ENCODE measurements at regions of chr22 and their contacts with region 1.

Region 1: DNA sequence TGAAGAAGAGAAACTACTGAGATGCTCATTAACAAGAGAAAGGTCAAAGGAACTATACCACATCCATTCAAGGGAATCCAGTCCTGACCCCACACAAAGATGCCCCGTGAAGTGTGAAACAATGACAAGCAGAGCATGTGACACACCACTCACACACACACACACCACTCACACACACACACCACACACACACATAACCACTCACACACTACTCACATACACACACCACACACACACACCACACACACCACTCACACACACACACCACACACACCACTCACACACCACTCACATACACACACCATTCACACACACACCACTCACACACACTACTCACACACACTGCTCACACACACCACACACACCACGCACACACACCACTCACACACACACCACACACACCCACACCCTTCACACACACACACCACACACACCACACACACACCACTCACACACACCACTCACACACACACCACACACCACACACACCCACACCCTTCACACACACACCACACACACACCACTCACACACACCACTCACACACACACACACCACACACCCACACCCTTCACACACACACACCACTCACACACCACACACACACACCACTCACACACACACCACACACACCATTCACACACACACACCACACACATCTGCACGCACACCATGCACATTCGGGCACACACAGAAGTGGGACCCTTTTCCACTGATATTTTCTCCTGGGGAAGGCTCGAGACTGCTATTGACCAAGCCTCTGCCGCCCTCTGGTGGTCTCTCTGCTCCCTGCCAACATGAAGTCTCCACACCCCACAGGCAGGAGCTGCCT is 32.0 kb upstream of the COMT start:
- DNase-seq: peak; percentile 97 to 99 (median 98)
- ATAC-seq: peak; percentile 97
- H3K4me3 ChIP-seq: no peak overlapping the region
- H3K27ac ChIP-seq: peak overlapping the region; percentile 16; the same call in 1 of the 3 replicates
- H3K4me1 ChIP-seq: peaks cover 2 to 28% of the 10 kb centered on the region in 2 experiments; a peak in 4 of 5 replicates
- H3K27me3 ChIP-seq: no peaks in the 10 kb centered on the region; a peak in 1 of 5 replicates
- CTCF ChIP-seq: peak; percentile 98 to 100 (median 100)
- EP300 ChIP-seq: peak; percentile 51
- POLR2A ChIP-seq: peak; percentile 25; the same call in 1 of the 2 replicates
- RAD21 ChIP-seq: peak; percentile 100

Region 2: DNA sequence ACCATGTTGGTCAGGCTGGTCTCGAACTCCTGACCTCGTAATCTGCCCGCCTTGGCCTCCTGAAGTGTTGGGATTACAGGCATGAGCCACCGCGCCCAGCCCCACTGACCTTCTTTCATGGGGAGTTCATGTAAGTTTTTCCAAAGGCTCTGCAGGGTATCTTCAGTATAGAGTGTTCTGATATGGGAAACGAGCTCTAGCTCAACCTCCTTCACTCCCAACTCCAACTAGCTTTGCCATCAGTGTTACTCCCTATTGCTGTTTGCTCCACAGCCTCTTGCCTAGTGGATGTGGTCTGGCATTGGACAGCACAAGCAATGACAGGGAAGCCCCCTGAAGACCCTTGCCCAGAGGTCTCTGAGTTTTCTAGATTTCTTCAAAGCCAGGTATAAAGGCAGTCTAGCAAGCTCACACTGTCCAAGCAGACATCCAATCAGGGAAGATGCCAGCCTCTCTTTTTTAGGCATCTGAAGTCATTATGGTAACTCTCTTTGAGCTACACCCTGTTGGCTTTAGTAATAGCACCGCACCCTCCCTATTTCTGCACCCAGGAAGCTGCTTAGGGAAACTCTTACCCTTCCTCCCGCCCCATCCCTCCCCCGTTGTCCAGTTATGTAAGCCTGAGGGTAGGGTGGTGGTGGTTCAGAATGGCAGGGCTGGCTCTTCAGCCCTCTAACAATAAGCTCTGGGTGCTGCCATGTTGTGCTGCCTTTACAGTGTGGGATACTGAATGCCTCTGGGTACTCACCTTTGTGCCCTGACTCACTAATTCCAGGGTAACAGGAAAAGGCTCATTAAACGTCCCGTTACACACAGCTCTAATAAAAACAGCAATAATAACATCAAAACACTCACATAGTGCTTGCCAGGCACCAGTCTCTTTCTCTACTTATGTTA is 343.9 kb before region 1 on chr22:
- CTCF ChIA-PET with region 1: no interaction called
- POLR2A ChIA-PET with region 1: no interaction called
- in situ Hi-C with region 1: no loop called
- intact Hi-C with region 1: no loop called
- DNase-seq: peak in 2 of 4 experiments; percentile 24 to 40
- ATAC-seq: no peak
- H3K4me3 ChIP-seq: no peak overlapping the region
- H3K27ac ChIP-seq: no peak overlapping the region
- H3K4me1 ChIP-seq: peaks cover 0 to 8% of the 10 kb centered on the region in 2 experiments; a peak in 2 of 5 replicates
- H3K27me3 ChIP-seq: peaks cover 64 to 73% of the 10 kb centered on the region in 2 experiments
- CTCF ChIP-seq: no peak
- EP300 ChIP-seq: no peak
- POLR2A ChIP-seq: no peak
- RAD21 ChIP-seq: no peak

Region 3: DNA sequence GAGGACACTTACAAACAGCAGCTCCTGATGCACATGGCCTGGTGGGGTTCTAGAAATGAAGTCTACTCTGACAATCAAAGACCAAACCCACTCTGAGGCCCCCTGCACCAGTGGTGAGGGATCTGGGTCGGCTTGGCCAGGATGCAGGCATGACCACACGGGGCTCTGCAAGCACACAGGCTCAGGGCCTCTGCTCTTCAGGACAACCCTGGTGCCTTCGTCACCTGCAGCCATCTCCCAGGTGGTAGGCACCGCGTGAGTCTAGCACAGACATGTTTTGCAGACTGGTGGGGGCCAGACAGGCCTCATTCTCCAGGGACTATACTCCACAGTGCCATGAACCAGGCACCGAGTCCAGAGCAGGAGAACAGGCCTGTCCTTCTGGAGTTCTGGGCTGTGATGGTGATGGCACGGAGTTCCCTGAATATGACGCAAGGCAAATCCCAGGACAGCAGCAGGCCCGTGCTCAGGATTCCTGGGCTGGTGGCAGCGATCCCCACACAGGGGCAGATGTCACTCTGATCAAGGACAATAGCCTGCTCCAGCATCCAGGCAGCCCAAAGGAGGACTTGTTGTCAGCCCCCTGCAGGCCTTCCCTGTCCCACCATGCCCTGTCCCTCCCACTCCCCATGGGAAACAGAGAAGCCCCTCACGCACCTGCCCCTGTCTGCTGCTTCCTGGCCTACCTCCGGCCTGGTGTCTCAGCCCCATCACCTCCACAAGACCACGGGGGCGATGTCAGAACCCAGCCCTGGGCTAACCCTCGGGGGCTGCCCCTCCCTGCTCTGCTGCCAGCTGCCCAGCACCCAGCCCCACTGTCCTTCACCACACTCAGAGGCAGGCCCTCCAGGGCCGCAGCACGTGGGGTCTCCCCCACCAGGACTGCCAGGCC is 91.0 kb before region 1 on chr22:
- CTCF ChIA-PET with region 1: interaction called, 5 read pairs
- POLR2A ChIA-PET with region 1: interaction called, 4 read pairs
- in situ Hi-C with region 1: no loop called
- intact Hi-C with region 1: loop called (anchors 1 kb)
- DNase-seq: no peak
- ATAC-seq: no peak
- H3K4me3 ChIP-seq: no peak overlapping the region
- H3K27ac ChIP-seq: no peak overlapping the region
- H3K4me1 ChIP-seq: peaks cover 22 to 81% of the 10 kb centered on the region in 2 experiments
- H3K27me3 ChIP-seq: no peaks in the 10 kb centered on the region
- CTCF ChIP-seq: peak in 2 of 3 experiments; percentile 13 to 21; a peak in 1 of 6 replicates
- EP300 ChIP-seq: no peak
- POLR2A ChIP-seq: no peak
- RAD21 ChIP-seq: no peak

Region 4: GRCh38 chr22:19891317-19892256 is 18.0 kb before region 1 on chr22:
- CTCF ChIA-PET with region 1: no interaction called
- POLR2A ChIA-PET with region 1: interaction called, 141 read pairs
- in situ Hi-C with region 1: no loop called
- intact Hi-C with region 1: no loop called
- DNase-seq: peak; percentile 98 to 99 (median 98)
- ATAC-seq: peak; percentile 92
- H3K4me3 ChIP-seq: no peak overlapping the region
- H3K27ac ChIP-seq: peak overlapping the region; percentile 46; the same call in 2 of the 3 replicates
- H3K4me1 ChIP-seq: peaks cover 24 to 62% of the 10 kb centered on the region in 2 experiments
- H3K27me3 ChIP-seq: no peaks in the 10 kb centered on the region
- CTCF ChIP-seq: peak in 2 of 3 experiments; percentile 9 to 33; a peak in 2 of 6 replicates
- EP300 ChIP-seq: peak; percentile 99
- POLR2A ChIP-seq: no peak; the same call in 1 of the 2 replicates
- RAD21 ChIP-seq: peak in 1 of 2 experiments; percentile 54; a peak in 2 of 4 replicates

Region 5: DNA sequence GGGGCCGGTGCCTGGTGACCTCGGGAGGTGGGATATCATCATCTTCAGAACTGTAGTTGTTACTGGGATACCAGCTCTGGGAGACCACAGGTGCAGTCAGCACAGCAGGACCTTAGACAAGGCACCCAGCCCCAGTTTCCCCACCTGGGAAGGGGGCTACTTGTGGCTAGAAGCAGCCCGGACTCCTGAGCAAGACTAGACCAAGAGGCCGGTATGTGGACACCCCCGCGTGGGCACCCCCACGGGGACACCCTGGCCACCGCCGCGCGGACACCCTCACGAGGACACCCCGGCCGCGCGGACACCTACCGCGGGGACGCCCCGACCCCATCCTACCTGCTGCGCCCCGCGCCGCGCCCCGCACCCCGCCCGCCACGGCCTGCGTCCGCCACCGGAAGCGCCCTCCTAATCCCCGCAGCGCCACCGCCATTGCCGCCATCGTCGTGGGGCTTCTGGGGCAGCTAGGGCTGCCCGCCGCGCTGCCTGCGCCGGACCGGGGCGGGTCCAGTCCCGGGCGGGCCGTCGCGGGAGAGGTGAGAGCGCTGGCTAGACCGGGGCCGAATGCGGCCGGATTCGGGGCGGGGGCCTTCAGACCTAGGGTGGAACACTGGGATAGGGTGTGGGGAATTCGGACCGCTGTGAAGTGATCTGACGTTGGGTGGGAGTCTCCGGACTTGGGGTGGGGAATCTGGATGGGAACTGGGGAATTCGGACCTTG is 32.0 kb after region 1 on chr22 and contains the starts of genes COMT and TXNRD2:
- CTCF ChIA-PET with region 1: no interaction called
- POLR2A ChIA-PET with region 1: interaction called, 22 read pairs
- in situ Hi-C with region 1: no loop called
- intact Hi-C with region 1: no loop called
- DNase-seq: peak; percentile 96 to 100 (median 100)
- ATAC-seq: peak; percentile 88
- H3K4me3 ChIP-seq: peak within 1 kb of the TSS; percentile 58
- H3K27ac ChIP-seq: peak within 1 kb of the TSS; percentile 88
- H3K4me1 ChIP-seq: peaks cover 35 to 37% of the 10 kb centered on the region in 2 experiments
- H3K27me3 ChIP-seq: no peaks in the 10 kb centered on the region; a peak in 1 of 5 replicates
- CTCF ChIP-seq: peak in 1 of 3 experiments; percentile 34; a peak in 3 of 6 replicates
- EP300 ChIP-seq: peak; percentile 21; the same call in 1 of the 2 replicates
- POLR2A ChIP-seq: no peak
- RAD21 ChIP-seq: no peak
- polyA plus RNA-seq, gene COMT: 12.5 to 39.6 TPM
- polyA plus RNA-seq, gene TXNRD2: 3.3 to 4.4 TPM

Region 6: GRCh38 chr22:20062766-20063083 is 153.2 kb after region 1 on chr22:
- CTCF ChIA-PET with region 1: no interaction called
- POLR2A ChIA-PET with region 1: no interaction called
- in situ Hi-C with region 1: no loop called
- intact Hi-C with region 1: no loop called
- DNase-seq: peak in 1 of 4 experiments; percentile 52
- ATAC-seq: no peak
- H3K4me3 ChIP-seq: no peak overlapping the region
- H3K27ac ChIP-seq: no peak overlapping the region
- H3K4me1 ChIP-seq: peaks cover 24 to 76% of the 10 kb centered on the region in 2 experiments
- H3K27me3 ChIP-seq: no peaks in the 10 kb centered on the region
- CTCF ChIP-seq: no peak
- EP300 ChIP-seq: no peak
- POLR2A ChIP-seq: no peak
- RAD21 ChIP-seq: no peak